ENCODE measurements at regions of chr1 and their contacts with region 1.

Region 1: GRCh38 chr1:35577071-35577998 is 4.2 kb downstream of the TFAP2E start:
- DNase-seq: peak; percentile 81
- ATAC-seq: peak; percentile 85
- H3K4me3 ChIP-seq: peak overlapping the region; percentile 60 to 75 (median 71)
- H3K4me3 Mint-ChIP-seq: peak overlapping the region; percentile 91
- H3K27ac ChIP-seq: peak overlapping the region; percentile 43 to 62
- H3K27ac Mint-ChIP-seq: peak overlapping the region; percentile 90
- H3K4me1 ChIP-seq: peaks cover 21 to 39% of the 10 kb centered on the region in 2 donors
- H3K4me1 Mint-ChIP-seq: peaks cover 38% of the 10 kb centered on the region
- H3K27me3 ChIP-seq: peaks cover 0 to 21% (median 6%) of the 10 kb centered on the region in 4 experiments
- H3K27me3 Mint-ChIP-seq: peaks cover 14% of the 10 kb centered on the region
- CTCF ChIP-seq: no peak

Region 2: GRCh38 chr1:35532497-35533223 is 44.7 kb before region 1 on chr1:
- CTCF ChIA-PET with region 1: no interaction called
- POLR2A ChIA-PET with region 1: no interaction called
- intact Hi-C with region 1: no loop called
- DNase-seq: no peak
- ATAC-seq: no peak
- H3K4me3 ChIP-seq: no peak overlapping the region
- H3K4me3 Mint-ChIP-seq: no peak overlapping the region
- H3K27ac ChIP-seq: no peak overlapping the region
- H3K27ac Mint-ChIP-seq: no peak overlapping the region
- H3K4me1 ChIP-seq: no peaks in the 10 kb centered on the region
- H3K4me1 Mint-ChIP-seq: peaks cover 6% of the 10 kb centered on the region
- H3K27me3 ChIP-seq: no peaks in the 10 kb centered on the region
- H3K27me3 Mint-ChIP-seq: no peaks in the 10 kb centered on the region
- CTCF ChIP-seq: no peak

Region 3: DNA sequence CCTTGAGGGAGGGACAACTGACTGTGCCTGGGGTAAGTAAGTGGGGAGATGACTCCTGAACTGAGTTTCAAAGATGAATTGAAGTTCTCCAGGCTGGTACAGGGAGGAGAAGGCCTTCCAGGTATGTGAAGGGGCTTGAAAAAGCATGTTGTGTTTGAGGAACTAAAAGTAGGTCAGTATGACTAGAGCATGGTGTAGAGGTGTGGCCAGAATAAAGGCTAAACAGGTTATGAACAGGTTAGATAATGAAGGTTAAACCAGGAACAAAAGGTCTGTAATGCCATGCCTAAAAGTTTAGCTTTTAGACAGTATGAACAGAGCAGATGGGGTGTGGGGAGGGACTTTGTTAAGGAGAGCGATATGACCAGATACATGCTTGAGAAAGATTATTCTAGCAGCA is 199.8 kb after region 1 on chr1:
- CTCF ChIA-PET with region 1: interaction called, 17 read pairs
- POLR2A ChIA-PET with region 1: no interaction called
- intact Hi-C with region 1: no loop called
- DNase-seq: no peak
- ATAC-seq: no peak
- H3K4me3 ChIP-seq: no peak overlapping the region
- H3K4me3 Mint-ChIP-seq: no peak overlapping the region
- H3K27ac ChIP-seq: no peak overlapping the region
- H3K27ac Mint-ChIP-seq: no peak overlapping the region
- H3K4me1 ChIP-seq: peaks cover 0 to 3% of the 10 kb centered on the region in 2 donors
- H3K4me1 Mint-ChIP-seq: peaks cover 5% of the 10 kb centered on the region
- H3K27me3 ChIP-seq: no peaks in the 10 kb centered on the region
- H3K27me3 Mint-ChIP-seq: no peaks in the 10 kb centered on the region
- CTCF ChIP-seq: no peak

Measured in B cell (primary cell).